ENCODE measurements at regions of chr1 and their contacts with region 1.

Region 1: DNA sequence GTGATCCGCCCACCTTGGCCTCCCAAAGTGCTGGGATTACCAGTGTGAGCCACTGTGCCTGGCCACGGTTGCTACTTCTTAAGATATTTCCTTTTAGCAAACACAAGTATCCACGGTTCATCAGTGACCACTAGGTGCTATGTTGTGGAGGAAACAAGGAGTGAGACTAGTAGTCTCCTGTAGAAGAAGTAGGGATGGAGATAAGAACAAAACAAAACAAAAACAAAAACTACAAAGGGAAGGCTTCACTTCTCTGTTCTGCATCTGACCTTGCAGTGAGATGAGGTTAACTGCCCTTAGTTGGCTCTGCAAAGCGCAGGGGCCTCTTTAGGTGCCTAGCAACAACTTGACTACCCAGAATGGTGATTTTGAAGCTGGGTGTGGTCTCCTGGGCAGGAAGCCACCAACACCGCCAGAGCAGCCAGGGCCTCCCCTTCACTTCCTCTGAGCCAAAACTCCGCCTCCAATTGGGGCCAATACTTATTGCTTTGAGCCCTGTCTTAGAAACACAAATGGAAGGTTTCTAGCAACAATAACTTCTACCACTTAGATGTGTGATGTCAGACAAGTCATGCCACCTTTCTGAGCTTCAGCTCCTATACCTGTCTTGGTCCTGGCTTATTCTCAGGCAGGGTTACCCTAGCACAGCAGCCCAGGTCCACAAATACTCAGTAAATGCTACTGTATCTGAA is 12.8 kb upstream of the CDC42 start:
- DNase-seq: no peak
- ATAC-seq: peak; percentile 62; the same call in 1 of the 2 replicates
- H3K4me3 ChIP-seq: no peak overlapping the region
- H3K27ac ChIP-seq: no peak overlapping the region
- H3K4me1 ChIP-seq: no peaks in the 10 kb centered on the region
- H3K27me3 ChIP-seq: no peaks in the 10 kb centered on the region
- CTCF ChIP-seq: no peak

Region 2: GRCh38 chr1:21795075-21795474 is 244.7 kb before region 1 on chr1:
- CTCF ChIA-PET with region 1: no interaction called
- POLR2A ChIA-PET with region 1: no interaction called
- in situ Hi-C with region 1: no loop called
- intact Hi-C with region 1: no loop called
- DNase-seq: no peak
- ATAC-seq: no peak
- H3K4me3 ChIP-seq: no peak overlapping the region
- H3K27ac ChIP-seq: no peak overlapping the region
- H3K4me1 ChIP-seq: no peaks in the 10 kb centered on the region
- H3K27me3 ChIP-seq: no peaks in the 10 kb centered on the region
- CTCF ChIP-seq: no peak

Region 3: DNA sequence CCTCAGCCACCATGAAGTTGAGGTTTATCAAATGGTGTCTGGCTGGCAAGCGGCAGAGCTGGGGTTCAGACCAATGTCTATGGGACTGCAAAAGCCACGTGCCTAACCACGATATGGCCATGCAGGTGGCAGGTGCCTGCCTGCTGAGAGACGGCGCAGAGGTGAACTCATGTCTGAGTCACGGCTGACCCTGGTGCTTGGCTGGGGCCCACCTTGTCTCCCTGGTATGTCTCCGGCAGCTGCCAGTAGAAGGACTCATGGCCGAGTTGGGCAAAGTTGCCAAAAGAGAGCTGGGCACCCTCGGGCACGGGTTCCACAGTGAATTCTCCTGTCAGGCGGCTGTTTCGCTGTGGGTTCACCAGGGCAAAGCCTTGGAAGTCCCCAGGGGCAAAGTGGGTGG is 167.8 kb before region 1 on chr1:
- CTCF ChIA-PET with region 1: no interaction called
- POLR2A ChIA-PET with region 1: no interaction called
- in situ Hi-C with region 1: no loop called
- intact Hi-C with region 1: no loop called
- DNase-seq: no peak
- ATAC-seq: no peak
- H3K4me3 ChIP-seq: no peak overlapping the region
- H3K27ac ChIP-seq: no peak overlapping the region
- H3K4me1 ChIP-seq: peaks cover 14% of the 10 kb centered on the region
- H3K27me3 ChIP-seq: no peaks in the 10 kb centered on the region
- CTCF ChIP-seq: no peak

Region 4: GRCh38 chr1:22159891-22160290 is 120.2 kb after region 1 on chr1:
- CTCF ChIA-PET with region 1: no interaction called
- POLR2A ChIA-PET with region 1: interaction called, 16 read pairs
- in situ Hi-C with region 1: no loop called
- intact Hi-C with region 1: no loop called
- DNase-seq: no peak
- ATAC-seq: no peak
- H3K4me3 ChIP-seq: no peak overlapping the region
- H3K27ac ChIP-seq: no peak overlapping the region
- H3K4me1 ChIP-seq: no peaks in the 10 kb centered on the region
- H3K27me3 ChIP-seq: no peaks in the 10 kb centered on the region
- CTCF ChIP-seq: no peak

Measured in Panc1 (cell line).